ENCODE measurements at regions of chr6 and their contacts with region 1.

Region 1: DNA sequence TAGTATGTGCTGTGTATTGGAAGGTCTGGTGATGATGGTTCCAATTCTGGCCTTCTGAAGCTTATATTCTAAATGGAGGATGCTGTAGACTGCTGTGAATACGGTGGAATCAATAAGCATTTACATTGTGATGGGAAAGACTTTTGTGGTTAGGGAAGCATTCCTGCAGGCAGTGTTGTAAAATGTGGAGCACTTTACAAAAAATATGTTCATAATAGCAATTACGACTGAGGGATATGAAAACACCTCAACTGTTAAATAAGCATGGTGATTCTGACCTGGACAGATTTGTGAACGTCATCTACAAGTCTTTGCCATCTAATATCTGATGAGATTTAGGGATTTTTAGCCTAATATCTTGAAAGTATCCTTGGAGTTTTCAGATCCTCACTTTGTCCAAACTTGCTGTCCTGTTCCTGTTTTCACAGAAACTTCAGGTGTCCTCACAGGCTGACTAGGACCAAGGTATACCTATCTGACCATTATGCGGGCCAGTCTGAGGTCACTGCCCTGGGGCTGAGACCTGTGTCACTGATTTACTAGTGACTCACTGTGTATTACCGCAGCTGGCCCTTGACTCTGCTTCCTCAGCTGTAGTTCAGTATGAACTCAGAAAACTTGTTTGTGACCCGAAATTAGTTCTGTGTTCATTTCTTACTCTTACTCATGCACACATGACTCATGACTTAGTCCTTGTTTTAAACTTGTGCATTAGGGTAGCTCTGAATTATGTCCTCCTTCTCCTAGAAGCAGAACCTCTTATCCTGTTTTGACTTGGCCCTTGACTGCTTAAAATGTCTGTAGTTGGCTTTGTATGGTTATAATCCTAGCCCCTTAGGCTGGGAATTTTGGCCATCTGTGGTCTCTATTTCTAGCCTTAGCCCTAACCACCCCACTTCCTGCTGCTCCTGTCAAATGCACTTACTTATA is 343.0 kb downstream of the CDKAL1 start:
- DNase-seq: peak; percentile 49 to 83
- ATAC-seq: peak; percentile 98 to 99
- H3K4me3 ChIP-seq: no peak overlapping the region
- H3K27ac ChIP-seq: peak overlapping the region; percentile 88 to 89
- H3K4me1 ChIP-seq: peaks cover 36% of the 10 kb centered on the region
- CTCF ChIP-seq: no peak
- EP300 ChIP-seq: peak; percentile 46 to 67; a peak in 2 of 5 replicates
- POLR2A ChIP-seq: no peak
- RAD21 ChIP-seq: peak in 1 of 2 experiments; percentile 60; a peak in 4 of 5 replicates

Region 2: GRCh38 chr6:20866935-20867703 is 10.2 kb before region 1 on chr6:
- CTCF ChIA-PET with region 1: no interaction called
- POLR2A ChIA-PET with region 1: no interaction called
- DNase-seq: peak in 1 of 2 experiments; percentile 13
- ATAC-seq: peak in 1 of 2 experiments; percentile 39; a peak in 3 of 6 replicates
- H3K4me3 ChIP-seq: no peak overlapping the region
- H3K27ac ChIP-seq: peak overlapping the region; percentile 65 to 71
- H3K4me1 ChIP-seq: peaks cover 22% of the 10 kb centered on the region
- CTCF ChIP-seq: no peak
- EP300 ChIP-seq: no peak
- POLR2A ChIP-seq: no peak
- RAD21 ChIP-seq: no peak

Region 3: DNA sequence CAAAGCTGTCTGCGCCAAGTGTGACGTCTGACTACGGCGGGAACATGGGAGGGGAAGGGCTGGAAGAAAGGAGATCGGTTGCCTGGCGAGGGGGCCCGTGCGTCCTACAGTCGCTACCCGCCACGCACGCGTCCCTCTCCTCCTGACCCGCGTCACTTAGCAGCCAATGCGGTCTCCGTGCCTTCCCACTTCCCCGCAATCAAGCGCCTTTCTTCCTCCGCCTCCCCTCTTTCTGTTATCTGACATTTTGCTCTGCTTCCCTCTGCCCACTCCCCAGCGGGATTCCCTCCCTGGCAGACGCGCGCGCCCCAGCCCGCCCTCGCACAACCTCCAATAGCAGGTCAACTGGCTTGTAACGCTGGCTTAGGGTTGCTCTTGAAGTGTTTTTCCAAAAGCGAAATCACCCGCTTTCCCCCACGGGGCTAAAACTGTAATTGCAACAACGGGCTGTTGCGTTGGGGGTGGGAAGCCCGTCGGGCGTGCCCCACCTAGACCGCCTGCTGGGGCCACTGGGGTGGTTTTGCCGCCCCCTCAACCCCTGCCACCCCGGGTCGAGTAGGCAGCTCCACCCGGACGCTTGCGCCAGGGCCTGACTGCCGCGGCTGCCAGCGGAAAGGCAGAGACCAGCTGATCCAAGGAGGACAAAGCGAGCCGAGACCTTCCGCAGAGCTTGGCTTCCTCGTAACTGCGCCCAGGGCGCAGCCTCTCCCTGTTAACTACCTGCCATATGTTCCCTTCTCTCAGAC is 710.1 kb after region 1 on chr6:
- CTCF ChIA-PET with region 1: interaction called, 27 read pairs
- POLR2A ChIA-PET with region 1: interaction called, 17 read pairs
- DNase-seq: peak; percentile 36 to 61
- ATAC-seq: peak; percentile 67 to 68
- H3K4me3 ChIP-seq: peak overlapping the region; percentile 67
- H3K27ac ChIP-seq: peak overlapping the region; percentile 92 to 93
- H3K4me1 ChIP-seq: peaks cover 12% of the 10 kb centered on the region
- CTCF ChIP-seq: no peak
- EP300 ChIP-seq: no peak
- POLR2A ChIP-seq: 0 out of 2 replicates have a peak, but pooled peaks have one; percentile 7
- RAD21 ChIP-seq: peak in 1 of 2 experiments; percentile 34; a peak in 1 of 5 replicates